ENCODE measurements at regions of chr1 and their contacts with region 1.

Region 1: DNA sequence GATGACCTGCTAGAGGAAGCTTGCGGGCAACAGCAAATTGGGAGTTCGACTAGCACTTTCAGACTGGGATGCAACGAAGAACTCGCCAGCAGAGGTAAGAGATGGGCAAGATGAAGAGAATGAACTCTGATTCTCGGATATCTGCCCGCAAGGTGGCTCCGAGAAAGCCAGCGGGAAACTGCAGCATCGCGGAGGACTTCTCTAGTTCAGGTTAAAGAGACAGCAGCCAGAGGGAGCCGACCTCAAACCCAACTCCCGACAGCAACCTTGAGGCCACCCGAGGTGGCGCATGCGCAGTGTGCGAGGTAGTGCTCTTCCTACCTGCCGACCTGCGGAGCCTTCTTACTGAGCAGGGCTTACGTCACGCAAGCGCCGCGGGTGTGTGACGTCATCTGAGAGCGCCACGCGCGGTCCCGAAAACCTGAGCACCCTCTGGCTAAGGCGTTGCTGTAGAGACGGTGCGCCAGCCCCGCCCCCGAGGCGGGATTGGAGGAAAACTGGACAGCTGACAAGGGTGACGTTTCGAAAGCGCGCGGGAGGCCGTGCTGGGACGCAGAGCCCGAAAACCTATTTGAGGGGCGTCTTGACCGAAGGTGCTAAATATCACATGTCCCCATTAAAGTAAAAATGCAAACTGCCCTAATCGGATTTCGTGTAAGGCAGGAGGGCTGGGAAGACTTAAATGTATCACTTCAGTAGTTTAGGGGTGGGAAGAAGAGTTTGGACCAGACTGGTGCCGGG is 110.5 kb upstream of the SLC25A33 start:
- DNase-seq: peak; percentile 99 to 100 (median 100)
- ATAC-seq: peak; percentile 79
- H3K4me3 ChIP-seq: peak overlapping the region; percentile 51 to 54
- H3K4me3 Mint-ChIP-seq: peak overlapping the region; percentile 97
- H3K27ac ChIP-seq: peak overlapping the region; percentile 64 to 69
- H3K27ac Mint-ChIP-seq: peak overlapping the region; percentile 99
- H3K4me1 ChIP-seq: peaks cover 44% of the 10 kb centered on the region
- H3K4me1 Mint-ChIP-seq: peaks cover 51% of the 10 kb centered on the region
- H3K27me3 ChIP-seq: peaks cover 0 to 4% of the 10 kb centered on the region in 2 experiments
- H3K27me3 Mint-ChIP-seq: no peaks in the 10 kb centered on the region
- CTCF ChIP-seq: no peak

Region 2: GRCh38 chr1:7783826-7784491 is 1644.8 kb before region 1 on chr1 and contains the start of gene PER3:
- CTCF ChIA-PET with region 1: no interaction called
- POLR2A ChIA-PET with region 1: no interaction called
- intact Hi-C with region 1: loop called in 1 of 2 experiments (anchors 5 kb)
- DNase-seq: peak; percentile 82 to 96 (median 89)
- ATAC-seq: peak; percentile 88
- H3K4me3 ChIP-seq: peak within 1 kb of the TSS; percentile 55 to 68
- H3K4me3 Mint-ChIP-seq: peak within 1 kb of the TSS; percentile 72
- H3K27ac ChIP-seq: peak within 1 kb of the TSS; percentile 76 to 88
- H3K27ac Mint-ChIP-seq: peak within 1 kb of the TSS; percentile 60
- H3K4me1 ChIP-seq: peaks cover 27% of the 10 kb centered on the region
- H3K4me1 Mint-ChIP-seq: peaks cover 30% of the 10 kb centered on the region
- H3K27me3 ChIP-seq: no peaks in the 10 kb centered on the region
- H3K27me3 Mint-ChIP-seq: no peaks in the 10 kb centered on the region
- CTCF ChIP-seq: no peak
- total RNA-seq, gene PER3: 8.7 to 10.2 TPM

Region 3: DNA sequence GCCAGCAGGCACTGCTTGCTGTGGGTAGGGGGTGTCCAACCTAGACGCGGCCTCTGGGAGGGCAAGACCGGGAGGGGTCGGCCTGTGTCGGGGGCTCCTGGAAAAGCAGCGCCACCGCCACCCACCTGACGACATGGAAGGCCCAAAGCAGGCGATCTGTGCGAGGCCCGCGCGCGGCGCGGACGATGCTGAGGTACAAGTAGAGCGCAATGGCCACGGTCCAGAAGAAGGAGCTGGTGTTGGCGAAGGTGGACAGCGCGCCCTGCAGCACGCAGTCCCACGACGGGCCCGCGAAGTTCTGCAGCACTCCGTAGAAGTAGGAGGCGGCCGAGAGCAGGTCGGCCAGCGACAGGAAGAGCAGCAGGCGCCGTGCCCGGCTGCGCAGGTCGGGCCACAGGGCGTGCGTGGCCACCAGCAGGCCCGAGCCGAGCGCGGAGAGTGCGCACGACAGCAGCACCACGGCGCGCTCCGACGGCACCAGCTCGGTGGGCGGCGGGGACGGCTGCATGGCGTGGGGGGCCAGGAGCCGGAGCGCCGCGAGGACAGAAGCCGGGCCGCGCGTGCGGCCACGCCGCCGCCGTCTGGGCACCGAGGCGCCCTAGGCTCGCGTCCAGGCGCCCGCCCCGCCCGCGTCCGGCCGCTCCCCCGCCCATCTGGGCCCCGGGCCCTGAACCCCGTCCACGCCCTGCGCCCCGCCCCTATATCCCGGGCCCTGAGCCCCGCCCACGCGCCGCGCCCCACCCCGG is 300.1 kb before region 1 on chr1 and contains the start of gene GPR157:
- CTCF ChIA-PET with region 1: interaction called, 3 read pairs
- POLR2A ChIA-PET with region 1: no interaction called
- intact Hi-C with region 1: loop called (anchors 2 to 5 kb)
- DNase-seq: peak; percentile 56 to 88 (median 81)
- ATAC-seq: peak; percentile 84
- H3K4me3 ChIP-seq: peak within 1 kb of the TSS; percentile 61 to 68
- H3K4me3 Mint-ChIP-seq: peak within 1 kb of the TSS; percentile 90
- H3K27ac ChIP-seq: peak within 1 kb of the TSS; percentile 37 to 50
- H3K27ac Mint-ChIP-seq: peak within 1 kb of the TSS; percentile 75
- H3K4me1 ChIP-seq: peaks cover 33% of the 10 kb centered on the region
- H3K4me1 Mint-ChIP-seq: peaks cover 35% of the 10 kb centered on the region
- H3K27me3 ChIP-seq: no peaks in the 10 kb centered on the region
- H3K27me3 Mint-ChIP-seq: no peaks in the 10 kb centered on the region
- CTCF ChIP-seq: no peak
- total RNA-seq, gene GPR157: 1.9 to 2.9 TPM

Region 4: DNA sequence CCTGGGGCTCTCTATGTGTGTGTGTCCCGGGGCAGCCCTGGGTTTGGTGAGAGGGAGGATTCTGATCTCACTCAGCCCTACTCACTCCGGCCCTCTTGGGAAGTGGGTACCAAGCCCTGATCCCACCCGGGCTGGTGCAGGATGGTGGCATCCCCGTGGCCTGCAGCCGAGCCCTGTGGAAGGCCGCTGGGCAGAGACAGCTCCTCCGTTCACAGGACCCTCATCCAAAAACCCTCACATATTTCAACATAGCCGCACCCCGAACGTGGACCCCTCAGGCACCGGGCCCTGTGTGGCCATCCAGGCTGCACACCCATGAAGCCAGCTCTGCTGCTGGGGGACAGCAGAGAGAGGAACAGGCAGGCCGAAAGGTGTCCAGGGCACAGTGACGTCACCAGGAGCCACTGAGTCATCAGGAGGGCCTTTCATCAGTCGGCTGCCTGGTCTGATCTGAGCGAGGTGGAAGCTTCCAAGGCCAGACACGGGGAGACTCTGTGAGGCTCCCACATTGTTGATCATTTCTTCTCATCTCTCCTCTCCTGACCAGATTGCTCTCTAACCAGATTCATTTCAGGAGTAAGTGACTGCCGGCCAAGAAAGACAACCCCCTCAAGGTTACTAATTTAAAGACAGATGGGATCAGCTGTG is 283.6 kb before region 1 on chr1:
- CTCF ChIA-PET with region 1: no interaction called
- POLR2A ChIA-PET with region 1: no interaction called
- intact Hi-C with region 1: no loop called
- DNase-seq: no peak
- ATAC-seq: no peak
- H3K4me3 ChIP-seq: no peak overlapping the region
- H3K4me3 Mint-ChIP-seq: no peak overlapping the region
- H3K27ac ChIP-seq: no peak overlapping the region
- H3K27ac Mint-ChIP-seq: no peak overlapping the region
- H3K4me1 ChIP-seq: no peaks in the 10 kb centered on the region
- H3K4me1 Mint-ChIP-seq: peaks cover 3% of the 10 kb centered on the region
- H3K27me3 ChIP-seq: no peaks in the 10 kb centered on the region
- H3K27me3 Mint-ChIP-seq: no peaks in the 10 kb centered on the region
- CTCF ChIP-seq: no peak

Region 5: GRCh38 chr1:9292361-9293240 is 136.2 kb before region 1 on chr1 and contains the start of gene SPSB1:
- CTCF ChIA-PET with region 1: interaction called, 5 read pairs
- POLR2A ChIA-PET with region 1: no interaction called
- intact Hi-C with region 1: loop called in 1 of 2 experiments (anchors 1 kb)
- DNase-seq: peak; percentile 33 to 83 (median 66)
- ATAC-seq: peak; percentile 68
- H3K4me3 ChIP-seq: peak within 1 kb of the TSS; percentile 45 to 61
- H3K4me3 Mint-ChIP-seq: peak within 1 kb of the TSS; percentile 73
- H3K27ac ChIP-seq: no peak within 1 kb of the TSS
- H3K27ac Mint-ChIP-seq: no peak within 1 kb of the TSS
- H3K4me1 ChIP-seq: peaks cover 17% of the 10 kb centered on the region
- H3K4me1 Mint-ChIP-seq: peaks cover 10% of the 10 kb centered on the region
- H3K27me3 ChIP-seq: peaks cover 0 to 4% of the 10 kb centered on the region in 2 experiments
- H3K27me3 Mint-ChIP-seq: no peaks in the 10 kb centered on the region
- CTCF ChIP-seq: no peak
- total RNA-seq, gene SPSB1: 1.6 to 2.2 TPM

Region 6: GRCh38 chr1:9539165-9539828 is 110.5 kb after region 1 on chr1 and contains the start of gene SLC25A33:
- CTCF ChIA-PET with region 1: no interaction called
- POLR2A ChIA-PET with region 1: no interaction called
- intact Hi-C with region 1: loop called in 1 of 2 experiments (anchors 2 kb)
- DNase-seq: peak; percentile 91 to 99 (median 96)
- ATAC-seq: peak; percentile 99
- H3K4me3 ChIP-seq: peak within 1 kb of the TSS; percentile 62 to 68
- H3K4me3 Mint-ChIP-seq: peak within 1 kb of the TSS; percentile 90
- H3K27ac ChIP-seq: peak within 1 kb of the TSS; percentile 59 to 83
- H3K27ac Mint-ChIP-seq: peak within 1 kb of the TSS; percentile 91
- H3K4me1 ChIP-seq: peaks cover 19% of the 10 kb centered on the region
- H3K4me1 Mint-ChIP-seq: peaks cover 33% of the 10 kb centered on the region
- H3K27me3 ChIP-seq: no peaks in the 10 kb centered on the region
- H3K27me3 Mint-ChIP-seq: no peaks in the 10 kb centered on the region
- CTCF ChIP-seq: no peak
- total RNA-seq, gene SLC25A33: 10.1 to 11.2 TPM

Measured in CD8-positive, alpha-beta T cell (primary cell).